Prostate gland (tissue), 2 donors: ENCODE measurements at regions of chr17 and their contacts with region 1.

Region 1: DNA sequence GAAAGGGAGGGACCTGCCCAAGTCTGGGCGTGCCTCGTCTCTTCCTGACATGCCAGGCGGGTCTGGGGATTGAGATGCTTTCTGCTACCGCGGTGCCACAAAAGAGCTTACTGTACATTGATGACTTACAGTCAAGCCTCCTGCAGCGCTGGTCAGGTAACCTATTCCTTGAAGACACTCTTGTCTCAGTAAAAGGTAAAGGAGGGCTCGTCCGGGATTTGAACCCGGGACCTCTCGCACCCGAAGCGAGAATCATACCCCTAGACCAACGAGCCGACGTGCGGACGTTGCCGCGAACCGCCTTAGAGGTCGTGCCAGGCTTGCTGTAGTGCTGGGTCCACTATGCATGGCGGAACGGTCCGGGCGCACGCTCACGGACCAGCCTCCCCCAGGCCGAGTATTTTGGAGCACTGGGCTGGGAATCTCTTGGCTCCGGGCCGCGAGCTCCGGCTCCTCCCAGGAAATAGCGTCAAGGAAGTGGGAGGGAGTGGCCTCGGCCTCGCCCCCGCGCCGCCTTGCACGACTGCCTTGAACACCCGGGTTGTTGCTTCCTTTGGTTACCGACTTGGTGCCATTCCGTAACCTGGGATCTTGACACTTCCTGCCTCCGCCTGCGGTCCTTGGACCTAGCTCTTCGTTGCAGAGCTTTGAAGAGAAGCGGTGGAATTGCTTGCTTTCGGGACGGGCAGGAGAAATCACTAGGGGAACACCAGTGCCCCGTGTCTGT is 12.4 kb upstream of the AURKB start:
- DNase-seq: peak; percentile 90
- H3K4me3 ChIP-seq: peak overlapping the region; percentile 41 to 55
- H3K27ac ChIP-seq: peak overlapping the region; percentile 98 to 99
- H3K4me1 ChIP-seq: peaks cover 9% of the 10 kb centered on the region
- H3K27me3 ChIP-seq: no peaks in the 10 kb centered on the region
- CTCF ChIP-seq: peak in 1 of 4 experiments; percentile 10
- POLR2A ChIP-seq: peak; percentile 81

Region 2: DNA sequence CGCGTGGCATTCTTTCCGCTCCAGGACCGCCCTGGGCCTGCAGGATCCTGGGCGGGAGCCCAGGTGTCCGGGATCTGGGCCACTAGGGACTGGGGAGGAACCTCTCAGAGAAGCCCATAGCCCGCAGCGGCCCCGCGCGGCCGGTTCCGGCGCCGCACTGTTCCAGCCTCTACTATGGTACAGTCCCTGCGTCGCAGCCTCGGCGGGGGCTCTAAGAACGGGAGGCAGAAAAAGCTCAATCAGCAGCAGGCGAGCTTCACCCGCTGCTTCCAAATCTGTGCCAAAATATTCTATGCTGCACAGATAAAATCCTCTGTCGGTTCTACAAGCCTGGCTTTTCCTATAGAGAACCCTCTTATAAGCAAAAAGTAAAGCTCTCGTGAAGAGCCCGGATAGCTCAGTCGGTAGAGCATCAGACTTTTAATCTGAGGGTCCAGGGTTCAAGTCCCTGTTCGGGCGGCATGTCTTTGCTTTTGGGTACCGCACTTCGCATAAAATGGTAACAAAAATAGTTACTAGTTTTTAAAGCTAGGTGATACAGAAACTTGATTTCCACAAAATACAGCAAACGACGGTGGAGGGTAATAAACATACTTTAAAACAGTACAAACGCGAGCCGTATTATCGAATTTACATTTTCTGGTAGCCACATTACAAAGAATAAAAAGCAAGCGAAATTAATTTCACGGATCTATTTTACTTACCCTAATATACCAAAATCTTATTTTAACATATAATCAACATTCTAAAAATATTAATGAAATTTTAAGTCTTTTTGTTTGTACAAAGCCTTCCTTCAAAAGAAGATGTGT is 103.8 kb before region 1 on chr17:
- intact Hi-C with region 1: loop called (anchors 2 kb)
- DNase-seq: peak; percentile 87
- H3K4me3 ChIP-seq: peak overlapping the region; percentile 34 to 44
- H3K27ac ChIP-seq: peak overlapping the region; percentile 78 to 82
- H3K4me1 ChIP-seq: peaks cover 10% of the 10 kb centered on the region
- H3K27me3 ChIP-seq: no peaks in the 10 kb centered on the region
- CTCF ChIP-seq: peak; percentile 74 to 94 (median 84)
- POLR2A ChIP-seq: peak; percentile 3

Region 3: GRCh38 chr17:8189711-8190477 is 32.9 kb before region 1 on chr17 and contains the start of gene BORCS6:
- intact Hi-C with region 1: loop called (anchors 1 kb)
- DNase-seq: peak; percentile 99
- H3K4me3 ChIP-seq: peak within 1 kb of the TSS; percentile 85 to 90
- H3K27ac ChIP-seq: peak within 1 kb of the TSS; percentile 91 to 95
- H3K4me1 ChIP-seq: peaks cover 14% of the 10 kb centered on the region
- H3K27me3 ChIP-seq: no peaks in the 10 kb centered on the region
- CTCF ChIP-seq: peak in 1 of 4 experiments; percentile 11
- POLR2A ChIP-seq: peak; percentile 84
- total RNA-seq, gene BORCS6: 9.6 to 19.1 TPM

Region 4: GRCh38 chr17:8248751-8249607 is 26.2 kb after region 1 on chr17 and contains the start of gene PFAS:
- intact Hi-C with region 1: loop called (anchors 2 kb)
- DNase-seq: peak; percentile 94
- H3K4me3 ChIP-seq: peak within 1 kb of the TSS; percentile 59 to 62
- H3K27ac ChIP-seq: peak within 1 kb of the TSS; percentile 98 to 99
- H3K4me1 ChIP-seq: no peaks in the 10 kb centered on the region
- H3K27me3 ChIP-seq: no peaks in the 10 kb centered on the region
- CTCF ChIP-seq: peak in 2 of 4 experiments; percentile 4 to 13
- POLR2A ChIP-seq: peak; percentile 70
- total RNA-seq, gene PFAS: 17.0 to 29.0 TPM

Region 5: DNA sequence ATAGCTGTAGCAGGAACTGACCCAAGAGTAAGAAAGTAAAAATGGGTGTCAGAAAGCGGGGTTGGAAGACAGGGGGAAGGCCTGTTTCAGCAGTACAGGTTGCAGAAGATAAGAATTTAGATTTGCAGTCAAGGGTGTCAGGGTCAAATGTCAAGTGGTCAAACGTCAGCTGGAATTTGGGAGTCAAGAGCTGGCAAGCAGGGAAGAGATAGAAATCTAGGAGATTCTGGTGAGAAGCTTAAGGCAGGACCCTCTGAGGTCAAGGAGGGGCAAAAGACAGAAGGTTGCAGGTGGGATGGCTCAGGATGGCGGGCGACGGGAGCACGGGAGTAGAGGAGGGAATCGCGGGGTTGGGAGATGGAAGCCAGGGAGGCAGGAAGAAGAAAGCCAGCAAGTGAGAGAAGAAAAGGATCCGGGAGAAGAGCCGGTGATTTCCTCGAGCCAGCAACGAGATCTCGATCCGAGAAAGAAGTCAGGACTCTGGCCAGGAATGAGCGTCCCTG is 72.1 kb after region 1 on chr17:
- intact Hi-C with region 1: loop called (anchors 5 kb)
- DNase-seq: no peak
- H3K4me3 ChIP-seq: peak overlapping the region; percentile 47 to 64
- H3K27ac ChIP-seq: peak overlapping the region; percentile 87 to 93
- H3K4me1 ChIP-seq: peaks cover 3% of the 10 kb centered on the region
- H3K27me3 ChIP-seq: no peaks in the 10 kb centered on the region
- CTCF ChIP-seq: no peak
- POLR2A ChIP-seq: no peak